GM12878 (cell line): ENCODE measurements at regions of chr4 and their contacts with region 1.

Region 1: GRCh38 chr4:46844325-46844917 is 64.6 kb downstream of the COX7B2 start:
- DNase-seq: peak; percentile 4
- ATAC-seq: peak; percentile 81
- H3K4me3 ChIP-seq: no peak overlapping the region
- H3K27ac ChIP-seq: no peak overlapping the region
- H3K4me1 ChIP-seq: no peaks in the 10 kb centered on the region
- H3K27me3 ChIP-seq: no peaks in the 10 kb centered on the region
- CTCF ChIP-seq: peak; percentile 57 to 68 (median 66)
- EP300 ChIP-seq: no peak
- POLR2A ChIP-seq: no peak
- RAD21 ChIP-seq: peak; percentile 74

Region 2: GRCh38 chr4:46856333-46856732 is 11.9 kb after region 1 on chr4:
- CTCF ChIA-PET with region 1: interaction called, 10 read pairs
- POLR2A ChIA-PET with region 1: no interaction called
- RAD21 ChIA-PET with region 1: interaction called, 4 read pairs
- SMC1A ChIA-PET with region 1: interaction called, 3 read pairs
- in situ Hi-C with region 1: no loop called
- intact Hi-C with region 1: no loop called
- DNase-seq: no peak
- ATAC-seq: peak; percentile 48
- H3K4me3 ChIP-seq: no peak overlapping the region
- H3K27ac ChIP-seq: no peak overlapping the region
- H3K4me1 ChIP-seq: no peaks in the 10 kb centered on the region
- H3K27me3 ChIP-seq: no peaks in the 10 kb centered on the region
- CTCF ChIP-seq: no peak
- EP300 ChIP-seq: no peak
- POLR2A ChIP-seq: no peak
- RAD21 ChIP-seq: no peak

Region 3: GRCh38 chr4:47032415-47033106 is 188.1 kb after region 1 on chr4:
- CTCF ChIA-PET with region 1: interaction called, 11 read pairs
- POLR2A ChIA-PET with region 1: no interaction called
- RAD21 ChIA-PET with region 1: interaction called, 4 read pairs
- SMC1A ChIA-PET with region 1: interaction called, 5 read pairs
- in situ Hi-C with region 1: no loop called
- intact Hi-C with region 1: loop called (anchors 1 kb)
- DNase-seq: no peak
- ATAC-seq: peak; percentile 98
- H3K4me3 ChIP-seq: peak overlapping the region; percentile 21; the same call in 1 of the 2 replicates
- H3K27ac ChIP-seq: no peak overlapping the region
- H3K4me1 ChIP-seq: no peaks in the 10 kb centered on the region
- H3K27me3 ChIP-seq: peaks cover 2 to 10% of the 10 kb centered on the region in 2 experiments
- CTCF ChIP-seq: peak; percentile 62 to 83 (median 78)
- EP300 ChIP-seq: no peak
- POLR2A ChIP-seq: no peak
- RAD21 ChIP-seq: peak; percentile 71

Region 4: GRCh38 chr4:47106561-47106960 is 262.1 kb after region 1 on chr4:
- CTCF ChIA-PET with region 1: no interaction called
- POLR2A ChIA-PET with region 1: no interaction called
- RAD21 ChIA-PET with region 1: no interaction called
- SMC1A ChIA-PET with region 1: no interaction called
- in situ Hi-C with region 1: no loop called
- intact Hi-C with region 1: loop called (anchors 5 kb)
- DNase-seq: no peak
- ATAC-seq: no peak
- H3K4me3 ChIP-seq: no peak overlapping the region
- H3K27ac ChIP-seq: no peak overlapping the region
- H3K4me1 ChIP-seq: no peaks in the 10 kb centered on the region
- H3K27me3 ChIP-seq: no peaks in the 10 kb centered on the region
- CTCF ChIP-seq: no peak
- EP300 ChIP-seq: no peak
- POLR2A ChIP-seq: no peak
- RAD21 ChIP-seq: no peak

Region 5: GRCh38 chr4:47383829-47384427 is 539.5 kb after region 1 on chr4:
- CTCF ChIA-PET with region 1: interaction called, 13 read pairs
- POLR2A ChIA-PET with region 1: no interaction called
- RAD21 ChIA-PET with region 1: interaction called, 8 read pairs
- SMC1A ChIA-PET with region 1: interaction called, 9 read pairs
- in situ Hi-C with region 1: no loop called
- intact Hi-C with region 1: loop called (anchors 2 kb)
- DNase-seq: no peak
- ATAC-seq: peak; percentile 44; the same call in 2 of the 3 replicates
- H3K4me3 ChIP-seq: no peak overlapping the region
- H3K27ac ChIP-seq: no peak overlapping the region
- H3K4me1 ChIP-seq: no peaks in the 10 kb centered on the region
- H3K27me3 ChIP-seq: no peaks in the 10 kb centered on the region
- CTCF ChIP-seq: peak; percentile 19 to 59 (median 37); a peak in 4 of 6 replicates
- EP300 ChIP-seq: no peak
- POLR2A ChIP-seq: no peak
- RAD21 ChIP-seq: peak; percentile 83